Activated naive CD4-positive, alpha-beta T cell treated with anti-CD3 and anti-CD28 coated beads for 36 hours (primary cell): ENCODE measurements at regions of chr21 and their contacts with region 1.

Region 1: GRCh38 chr21:29334712-29335428 is 36.1 kb downstream of the BACH1 start:
- DNase-seq: no peak
- H3K4me3 Mint-ChIP-seq: no peak overlapping the region
- H3K27ac Mint-ChIP-seq: no peak overlapping the region
- H3K4me1 Mint-ChIP-seq: peaks cover 19% of the 10 kb centered on the region
- H3K27me3 Mint-ChIP-seq: no peaks in the 10 kb centered on the region

Region 2: GRCh38 chr21:29318354-29318753 is 16.5 kb before region 1 on chr21:
- CTCF ChIA-PET with region 1: interaction called, 3 read pairs
- intact Hi-C with region 1: loop called (anchors 2 kb)
- DNase-seq: no peak
- H3K4me3 Mint-ChIP-seq: no peak overlapping the region
- H3K27ac Mint-ChIP-seq: no peak overlapping the region
- H3K4me1 Mint-ChIP-seq: peaks cover 33% of the 10 kb centered on the region
- H3K27me3 Mint-ChIP-seq: no peaks in the 10 kb centered on the region